HepG2 (cell line): ENCODE measurements at regions of chr19 and their contacts with region 1.

Region 1: DNA sequence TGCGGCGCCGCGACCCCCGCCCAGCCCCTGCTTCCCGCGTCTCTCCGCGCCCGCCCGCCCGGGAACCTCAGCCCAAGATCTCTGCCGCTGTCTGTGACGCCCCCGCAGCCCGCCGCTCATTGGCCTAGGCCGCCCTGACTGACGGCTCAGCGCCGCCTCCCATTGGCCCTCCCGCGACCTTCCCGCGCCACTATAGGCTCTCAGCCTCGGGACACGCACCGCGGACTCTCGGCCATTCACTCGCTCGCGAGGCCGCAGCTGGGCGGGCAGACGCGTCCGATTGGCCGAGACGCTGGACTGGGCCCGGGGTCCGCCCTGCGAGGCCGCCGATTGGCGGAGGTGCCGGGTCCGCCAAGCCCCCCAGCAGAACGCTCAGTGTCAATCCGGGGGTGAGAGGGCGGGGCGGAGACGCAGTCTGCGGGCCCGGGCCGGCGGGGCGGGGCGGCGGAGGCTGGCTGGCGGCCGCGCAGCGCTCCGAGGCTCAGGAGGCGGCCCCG is at the start of gene PRKACA:
- DNase-seq: peak; percentile 94
- ATAC-seq: peak; percentile 91
- H3K4me3 ChIP-seq: peak within 1 kb of the TSS; percentile 80 to 89 (median 86)
- H3K27ac ChIP-seq: peak within 1 kb of the TSS; percentile 96
- H3K4me1 ChIP-seq: peaks cover 55% of the 10 kb centered on the region
- H3K27me3 ChIP-seq: no peaks in the 10 kb centered on the region; a peak in 1 of 5 replicates
- CTCF ChIP-seq: no peak
- EP300 ChIP-seq: no peak
- POLR2A ChIP-seq: 0 out of 4 replicates have a peak, but pooled peaks of 1 of the 2 experiments have one; percentile 15
- RAD21 ChIP-seq: no peak
- total RNA-seq, gene PRKACA: 11.0 and 14.0 TPM in 2 replicates

Region 2: DNA sequence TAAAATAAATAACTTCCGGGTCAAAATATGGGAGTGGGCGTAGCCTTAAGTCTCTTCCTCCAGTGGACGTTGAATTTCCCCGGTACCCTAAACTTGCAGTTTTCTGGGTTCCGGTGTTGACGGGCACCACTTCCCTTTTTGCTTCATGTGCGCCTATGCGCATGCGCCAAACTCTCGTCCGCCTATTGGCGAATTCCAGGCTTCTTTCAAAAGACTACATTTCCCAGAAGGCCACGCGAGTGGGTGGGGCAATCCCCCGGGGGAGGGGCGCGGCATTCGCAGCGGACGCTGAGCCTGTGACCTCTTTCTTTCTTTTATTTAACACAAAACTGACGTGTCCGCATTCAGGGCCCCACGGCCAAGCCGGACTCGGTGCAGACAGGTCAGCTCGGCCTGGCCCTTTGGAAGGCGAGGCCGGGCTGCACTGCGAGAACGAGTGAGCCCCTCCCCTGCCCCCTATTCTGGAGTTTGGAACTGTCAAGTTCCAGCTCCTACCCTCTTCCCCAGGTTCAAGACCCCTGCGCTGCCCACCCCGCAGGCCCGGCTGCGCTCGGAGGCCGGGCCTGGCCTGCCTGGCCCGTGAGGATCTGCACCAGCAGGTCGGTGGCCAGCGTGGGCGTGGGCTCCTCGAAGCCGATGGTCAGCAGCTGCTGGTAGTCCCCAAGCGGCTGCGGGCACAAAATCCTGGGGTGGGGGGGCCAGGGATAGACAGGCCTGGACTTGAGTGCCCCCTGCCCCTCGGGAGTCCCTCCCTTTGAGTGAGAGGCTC is 36.2 kb before region 1 on chr19:
- CTCF ChIA-PET with region 1: no interaction called
- POLR2A ChIA-PET with region 1: interaction called, 9 read pairs
- in situ Hi-C with region 1: no loop called
- intact Hi-C with region 1: loop called (anchors 5 kb)
- DNase-seq: peak; percentile 99
- ATAC-seq: peak; percentile 80
- H3K4me3 ChIP-seq: peak overlapping the region; percentile 79 to 95 (median 87)
- H3K27ac ChIP-seq: peak overlapping the region; percentile 91
- H3K4me1 ChIP-seq: peaks cover 42% of the 10 kb centered on the region
- H3K27me3 ChIP-seq: no peaks in the 10 kb centered on the region; a peak in 1 of 5 replicates
- CTCF ChIP-seq: no peak
- EP300 ChIP-seq: no peak
- POLR2A ChIP-seq: peak; percentile 82 to 87
- RAD21 ChIP-seq: no peak; the same call in 1 of the 2 replicates

Region 3: DNA sequence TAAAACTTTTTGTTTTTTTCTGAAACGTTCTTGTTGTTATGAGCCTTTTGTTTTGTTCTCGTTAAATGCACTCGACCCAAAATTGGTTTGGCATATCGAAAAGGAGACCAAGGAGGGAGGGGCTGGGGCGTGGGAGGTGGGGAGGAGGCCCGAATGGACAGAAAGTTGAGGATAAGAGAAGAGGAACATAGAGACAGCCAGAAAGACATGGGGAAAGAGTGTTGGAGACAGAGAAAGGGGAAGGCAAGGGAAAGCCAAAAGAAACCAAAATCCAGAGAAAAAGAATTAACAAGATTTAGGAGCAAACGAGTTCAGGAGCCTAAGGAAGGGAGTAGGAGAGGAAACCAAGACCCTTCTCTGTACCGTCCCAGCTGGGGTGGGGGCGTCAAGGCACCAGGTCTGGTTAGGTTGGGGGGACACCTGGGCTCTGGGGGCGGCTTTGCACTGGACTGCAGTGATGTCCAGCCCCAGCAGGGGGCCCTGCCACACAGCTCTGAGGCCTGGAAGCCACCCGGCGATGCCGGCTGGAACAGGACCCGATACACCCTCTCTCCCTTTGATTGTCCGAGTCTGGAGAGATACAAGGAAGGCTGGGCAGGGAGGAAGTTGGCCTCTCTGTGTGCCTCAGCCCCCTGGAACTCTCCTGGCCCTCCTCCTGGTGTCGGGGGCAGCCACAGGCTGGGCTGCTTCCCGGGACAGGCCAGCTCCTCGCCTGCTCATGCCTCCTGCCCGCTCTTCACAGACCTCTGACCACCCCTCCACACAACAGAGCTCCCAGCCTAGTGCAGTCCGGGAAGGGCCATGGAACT is 30.3 kb after region 1 on chr19:
- CTCF ChIA-PET with region 1: no interaction called
- POLR2A ChIA-PET with region 1: no interaction called
- in situ Hi-C with region 1: no loop called
- intact Hi-C with region 1: no loop called
- DNase-seq: peak; percentile 39
- ATAC-seq: peak; percentile 93
- H3K4me3 ChIP-seq: peak overlapping the region in 2 of 3 experiments; percentile 35 to 68; a peak in 3 of 6 replicates
- H3K27ac ChIP-seq: no peak overlapping the region
- H3K4me1 ChIP-seq: peaks cover 7% of the 10 kb centered on the region; the same call in 1 of the 2 replicates
- H3K27me3 ChIP-seq: no peaks in the 10 kb centered on the region; a peak in 1 of 5 replicates
- CTCF ChIP-seq: peak; percentile 90
- EP300 ChIP-seq: no peak
- POLR2A ChIP-seq: no peak
- RAD21 ChIP-seq: peak; percentile 73

Region 4: GRCh38 chr19:14167576-14168138 is 49.9 kb after region 1 on chr19:
- CTCF ChIA-PET with region 1: no interaction called
- POLR2A ChIA-PET with region 1: no interaction called
- in situ Hi-C with region 1: no loop called
- intact Hi-C with region 1: no loop called
- DNase-seq: no peak
- ATAC-seq: peak; percentile 76
- H3K4me3 ChIP-seq: no peak overlapping the region; a peak in 2 of 6 replicates
- H3K27ac ChIP-seq: no peak overlapping the region
- H3K4me1 ChIP-seq: no peaks in the 10 kb centered on the region
- H3K27me3 ChIP-seq: no peaks in the 10 kb centered on the region
- CTCF ChIP-seq: peak; percentile 37
- EP300 ChIP-seq: no peak
- POLR2A ChIP-seq: no peak
- RAD21 ChIP-seq: no peak

Region 5: GRCh38 chr19:14248578-14249011 is 130.9 kb after region 1 on chr19:
- CTCF ChIA-PET with region 1: no interaction called
- POLR2A ChIA-PET with region 1: no interaction called
- in situ Hi-C with region 1: no loop called
- intact Hi-C with region 1: no loop called
- DNase-seq: no peak
- ATAC-seq: no peak
- H3K4me3 ChIP-seq: no peak overlapping the region; a peak in 1 of 6 replicates
- H3K27ac ChIP-seq: no peak overlapping the region
- H3K4me1 ChIP-seq: no peaks in the 10 kb centered on the region
- H3K27me3 ChIP-seq: peaks cover 0 to 7% of the 10 kb centered on the region in 2 experiments; a peak in 1 of 5 replicates
- CTCF ChIP-seq: no peak
- EP300 ChIP-seq: no peak
- POLR2A ChIP-seq: no peak
- RAD21 ChIP-seq: no peak